Ascending aorta (tissue), 2 donors: ENCODE measurements at regions of chr10 and their contacts with region 1.

Region 1: DNA sequence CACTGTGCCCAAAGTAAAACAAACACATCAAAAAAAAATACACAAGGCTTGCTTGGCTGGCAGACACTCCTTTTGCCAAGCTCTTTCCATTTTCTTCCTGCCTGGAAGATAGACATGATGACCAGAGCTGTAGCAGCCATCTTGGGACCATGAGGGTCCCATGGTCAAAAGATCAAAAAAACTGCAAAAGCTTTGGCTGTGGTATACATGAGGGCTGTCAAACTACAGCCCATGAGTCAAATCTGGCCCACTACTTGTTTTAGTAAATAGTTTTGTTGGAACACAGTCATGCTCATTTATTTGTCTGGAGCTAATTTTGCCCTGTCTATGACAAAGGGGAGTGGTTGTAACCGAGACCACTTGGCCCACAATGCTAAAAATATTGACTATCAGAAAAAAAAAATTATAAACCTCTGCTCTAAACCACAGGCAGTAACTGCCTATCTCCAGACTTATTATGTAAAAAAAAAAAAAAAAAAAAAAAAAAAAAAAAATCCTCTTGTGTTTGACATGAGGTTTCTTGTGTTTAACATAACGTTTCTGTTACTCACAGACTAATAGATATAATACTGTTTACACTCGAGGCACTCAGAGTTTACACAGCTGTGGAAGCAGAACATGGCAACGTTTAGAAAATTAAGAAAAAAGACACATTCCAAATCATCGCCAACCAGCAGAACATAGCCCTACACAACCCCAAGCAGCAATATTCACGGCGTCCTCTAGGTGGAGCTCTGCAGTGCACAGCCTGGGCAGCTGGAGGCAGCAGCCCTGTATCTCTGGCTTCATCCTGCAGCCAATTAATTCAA is 36.9 kb downstream of the ASB13 start:
- DNase-seq: peak in 1 of 2 donors; percentile 83
- H3K4me3 ChIP-seq: peak overlapping the region; percentile 31 to 57
- H3K27ac ChIP-seq: peak overlapping the region; percentile 80 to 90
- H3K4me1 ChIP-seq: peaks cover 6 to 64% of the 10 kb centered on the region in 2 donors
- H3K27me3 ChIP-seq: no peaks in the 10 kb centered on the region
- CTCF ChIP-seq: peak; percentile 61 to 82 (median 81)

Region 2: GRCh38 chr10:3946234-3947229 is 1683.0 kb before region 1 on chr10:
- intact Hi-C with region 1: no loop called
- DNase-seq: no peak
- H3K4me3 ChIP-seq: no peak overlapping the region
- H3K27ac ChIP-seq: peak overlapping the region; percentile 78 to 86
- H3K4me1 ChIP-seq: peaks cover 3 to 16% of the 10 kb centered on the region in 2 donors
- H3K27me3 ChIP-seq: no peaks in the 10 kb centered on the region
- CTCF ChIP-seq: no peak

Region 3: GRCh38 chr10:5666008-5666829 is 36.7 kb after region 1 on chr10 and contains the start of gene ASB13:
- intact Hi-C with region 1: loop called (anchors 2 kb)
- DNase-seq: peak in 1 of 2 donors; percentile 78
- H3K4me3 ChIP-seq: peak within 1 kb of the TSS; percentile 78 to 99
- H3K27ac ChIP-seq: peak within 1 kb of the TSS; percentile 73 to 85
- H3K4me1 ChIP-seq: peaks cover 0 to 17% of the 10 kb centered on the region in 2 donors
- H3K27me3 ChIP-seq: no peaks in the 10 kb centered on the region
- CTCF ChIP-seq: no peak
- total RNA-seq, gene ASB13: 15.3 TPM

Region 4: GRCh38 chr10:5684318-5684970 is 54.9 kb after region 1 on chr10 and contains the start of gene TASOR2:
- intact Hi-C with region 1: loop called (anchors 2 kb)
- DNase-seq: peak; percentile 85 to 98
- H3K4me3 ChIP-seq: peak within 1 kb of the TSS; percentile 85 to 90
- H3K27ac ChIP-seq: peak within 1 kb of the TSS; percentile 85 to 87
- H3K4me1 ChIP-seq: peaks cover 0 to 13% of the 10 kb centered on the region in 2 donors
- H3K27me3 ChIP-seq: no peaks in the 10 kb centered on the region
- CTCF ChIP-seq: no peak
- total RNA-seq, gene TASOR2: 12.2 TPM

Region 5: GRCh38 chr10:5818894-5819293 is 189.4 kb after region 1 on chr10:
- intact Hi-C with region 1: no loop called
- DNase-seq: no peak
- H3K4me3 ChIP-seq: no peak overlapping the region
- H3K27ac ChIP-seq: no peak overlapping the region
- H3K4me1 ChIP-seq: peaks cover 0 to 9% of the 10 kb centered on the region in 2 donors
- H3K27me3 ChIP-seq: no peaks in the 10 kb centered on the region
- CTCF ChIP-seq: no peak

Region 6: GRCh38 chr10:5873515-5873995 is 244.0 kb after region 1 on chr10:
- intact Hi-C with region 1: loop called (anchors 5 kb)
- DNase-seq: peak in 1 of 2 donors; percentile 76
- H3K4me3 ChIP-seq: no peak overlapping the region
- H3K27ac ChIP-seq: no peak overlapping the region
- H3K4me1 ChIP-seq: no peaks in the 10 kb centered on the region
- H3K27me3 ChIP-seq: no peaks in the 10 kb centered on the region
- CTCF ChIP-seq: peak; percentile 39 to 64 (median 55)